ENCODE measurements at regions of chr11 and their contacts with region 1.

Region 1: GRCh38 chr11:44927174-44927661 is 23.5 kb downstream of the TP53I11 start:
- DNase-seq: peak; percentile 52
- H3K4me3 ChIP-seq: no peak overlapping the region
- H3K27ac ChIP-seq: no peak overlapping the region
- H3K4me1 ChIP-seq: no peaks in the 10 kb centered on the region
- H3K27me3 ChIP-seq: no peaks in the 10 kb centered on the region
- CTCF ChIP-seq: peak; percentile 79 to 85
- POLR2A ChIP-seq: no peak

Region 2: DNA sequence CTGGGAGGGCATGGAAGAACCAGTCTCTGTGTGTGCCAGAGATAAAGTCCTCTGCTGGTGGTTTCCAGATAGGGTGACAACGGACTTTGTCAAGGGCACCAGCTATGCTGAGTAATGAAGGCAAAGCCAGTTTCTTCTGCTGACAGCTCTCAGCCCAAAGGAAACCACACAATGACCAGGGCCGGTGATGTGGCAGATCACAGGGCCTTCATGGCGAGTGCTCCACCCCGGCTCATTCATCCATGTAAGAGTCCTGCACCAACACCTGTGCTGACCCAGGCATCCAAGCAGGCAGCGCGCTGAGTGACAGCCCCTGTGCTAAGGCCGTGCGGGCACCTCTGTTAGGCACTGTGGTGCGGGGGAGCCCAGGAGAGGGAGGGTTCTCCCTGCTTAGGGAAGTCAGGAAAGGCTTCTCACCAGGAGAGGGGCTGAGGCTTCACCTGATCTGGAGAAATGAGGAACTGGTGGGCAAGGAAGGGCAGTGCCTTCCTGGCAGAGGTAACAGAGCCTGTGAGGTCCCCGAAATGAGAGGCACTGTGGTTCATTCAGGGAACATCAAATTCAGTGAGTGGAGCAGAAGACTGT is 10.3 kb before region 1 on chr11:
- CTCF ChIA-PET with region 1: interaction called, 17 read pairs
- POLR2A ChIA-PET with region 1: no interaction called
- dilution Hi-C with region 1: no loop called
- intact Hi-C with region 1: no loop called
- DNase-seq: no peak
- H3K4me3 ChIP-seq: no peak overlapping the region
- H3K27ac ChIP-seq: no peak overlapping the region
- H3K4me1 ChIP-seq: peaks cover 2% of the 10 kb centered on the region
- H3K27me3 ChIP-seq: no peaks in the 10 kb centered on the region
- CTCF ChIP-seq: no peak
- POLR2A ChIP-seq: no peak

Region 3: DNA sequence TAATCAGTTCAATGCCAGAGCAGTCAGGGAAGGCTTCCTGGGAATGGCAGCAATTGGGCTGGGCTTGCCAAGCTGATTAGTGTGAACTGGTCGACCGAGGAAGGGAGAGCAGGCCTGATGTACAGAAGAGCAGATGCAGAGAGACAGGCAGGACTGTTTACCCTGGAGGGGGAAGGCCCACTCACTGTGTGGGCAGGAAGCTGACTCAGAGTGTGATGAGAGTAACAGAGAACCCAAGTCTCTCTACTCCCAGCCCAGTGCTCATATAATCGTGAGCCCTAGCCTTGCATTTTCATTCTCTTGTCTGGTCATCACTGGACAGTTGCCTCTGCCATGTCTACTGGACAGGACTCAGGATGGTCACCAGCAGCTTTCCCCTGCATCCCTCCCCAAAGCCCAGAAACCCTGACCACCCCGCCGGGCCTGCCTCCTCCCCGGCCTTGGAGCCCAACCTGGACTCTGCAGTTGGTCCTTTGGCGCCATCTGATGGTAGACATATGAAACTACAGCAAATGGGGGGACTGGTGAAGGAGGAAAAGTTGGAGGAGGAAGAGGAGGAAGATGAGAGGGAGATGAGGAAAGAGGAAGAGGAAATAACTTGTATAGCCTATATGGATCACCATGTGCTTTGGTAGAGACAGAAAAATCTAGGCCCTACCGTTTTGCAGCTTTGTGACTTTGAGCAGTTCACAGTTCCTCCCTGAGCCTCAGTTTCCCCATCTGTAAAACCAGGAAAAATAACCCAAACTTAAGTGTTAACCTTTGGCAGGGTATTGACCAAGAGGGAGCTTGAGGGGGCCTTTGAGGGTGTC is 175.8 kb after region 1 on chr11:
- CTCF ChIA-PET with region 1: interaction called, 1,618 read pairs
- POLR2A ChIA-PET with region 1: interaction called, 4 read pairs
- dilution Hi-C with region 1: no loop called
- intact Hi-C with region 1: loop called (anchors 1 kb)
- DNase-seq: peak; percentile 86
- H3K4me3 ChIP-seq: no peak overlapping the region
- H3K27ac ChIP-seq: no peak overlapping the region
- H3K4me1 ChIP-seq: peaks cover 7% of the 10 kb centered on the region
- H3K27me3 ChIP-seq: peaks cover 0 to 3% of the 10 kb centered on the region in 2 experiments
- CTCF ChIP-seq: peak; percentile 82
- POLR2A ChIP-seq: no peak

Region 4: DNA sequence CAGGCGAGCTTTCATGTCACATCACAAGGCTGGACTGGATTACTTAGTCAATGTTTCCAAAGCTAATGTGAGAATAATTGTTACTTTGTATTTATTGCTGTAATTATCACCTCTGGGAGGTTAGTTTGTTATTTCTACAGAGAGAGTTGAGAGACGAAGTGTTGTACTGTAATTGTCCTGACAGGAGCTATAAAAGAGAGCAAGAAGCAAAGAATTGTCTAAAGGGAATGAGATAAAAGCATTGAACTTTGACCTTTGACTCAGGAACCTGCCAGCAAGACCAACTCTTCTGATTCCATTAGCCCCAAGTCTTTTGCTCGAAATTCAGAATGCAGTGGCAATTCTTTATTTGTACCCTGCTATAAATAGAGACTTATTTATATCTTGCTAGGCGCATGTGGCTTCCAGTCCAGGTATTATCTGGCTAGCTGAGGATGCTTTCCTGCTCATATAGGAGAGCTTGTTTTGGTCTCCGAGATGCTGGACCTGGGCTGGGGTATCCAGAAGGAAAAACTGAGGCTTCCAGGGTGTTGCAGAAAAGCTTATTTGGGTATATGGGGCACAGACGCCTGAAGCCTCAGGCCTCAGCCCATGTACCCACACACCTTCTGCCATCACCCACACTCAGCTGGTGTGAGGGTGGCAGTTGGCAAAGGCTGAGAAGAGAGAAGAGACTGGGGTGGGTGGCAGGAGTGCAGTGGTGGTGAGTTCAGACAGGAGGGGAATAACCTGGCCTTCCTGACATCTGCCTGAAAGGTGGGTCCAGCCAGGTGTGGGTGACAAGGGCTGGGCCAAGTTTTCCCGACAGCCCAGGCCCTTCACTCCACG is 318.2 kb after region 1 on chr11:
- CTCF ChIA-PET with region 1: no interaction called
- POLR2A ChIA-PET with region 1: no interaction called
- dilution Hi-C with region 1: no loop called
- intact Hi-C with region 1: no loop called
- DNase-seq: no peak
- H3K4me3 ChIP-seq: no peak overlapping the region
- H3K27ac ChIP-seq: no peak overlapping the region
- H3K4me1 ChIP-seq: no peaks in the 10 kb centered on the region
- H3K27me3 ChIP-seq: peaks cover 4 to 6% of the 10 kb centered on the region in 2 experiments
- CTCF ChIP-seq: no peak
- POLR2A ChIP-seq: no peak